CD8-positive, alpha-beta memory T cell (primary cell): ENCODE measurements at regions of chr6 and their contacts with region 1.

Region 1: DNA sequence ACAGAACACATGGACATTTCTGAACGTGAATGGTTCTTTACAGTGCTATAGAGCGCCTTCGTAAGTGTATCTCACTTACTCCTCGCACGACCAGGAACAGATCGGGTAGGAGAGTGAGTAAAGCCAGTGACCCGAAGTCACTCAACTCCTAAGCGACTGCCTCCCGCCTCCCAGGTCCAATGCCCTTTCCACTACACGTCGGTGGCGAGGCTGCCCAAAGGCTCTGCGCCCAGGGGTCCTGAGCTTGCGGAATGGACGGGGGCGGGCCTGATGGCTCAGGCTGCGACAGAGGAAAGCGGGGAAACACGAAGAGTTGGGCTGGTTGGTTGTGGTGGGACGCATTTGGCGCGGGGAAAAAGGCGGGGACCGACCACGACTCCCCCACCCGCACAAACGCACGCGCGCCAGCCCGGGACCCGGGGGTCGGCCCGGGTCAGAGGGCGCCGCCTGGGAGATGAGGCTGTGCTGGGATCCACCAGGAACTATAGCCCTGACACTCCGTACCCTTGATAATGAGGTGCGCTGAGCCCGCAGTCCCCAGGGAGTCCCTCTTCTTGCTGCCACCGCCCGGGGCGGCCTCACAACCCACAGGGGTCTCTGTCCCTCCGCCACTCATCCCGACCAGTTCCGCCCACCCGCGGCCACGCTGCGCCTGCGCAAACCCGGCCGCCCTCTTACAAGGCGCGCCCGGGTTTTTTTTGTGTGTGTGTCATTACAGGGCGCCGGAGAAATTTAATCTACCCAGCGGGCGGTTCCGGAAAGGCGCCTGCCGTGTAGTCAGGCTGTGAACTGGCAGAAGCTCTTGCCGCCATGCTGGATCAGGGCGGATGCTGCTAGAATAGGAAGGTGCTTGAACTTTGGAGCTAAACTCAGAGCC is at the start of gene BLOC1S5:
- DNase-seq: peak; percentile 94 to 98 (median 96)
- H3K4me3 ChIP-seq: peak within 1 kb of the TSS; percentile 83
- H3K4me3 Mint-ChIP-seq: peak within 1 kb of the TSS; percentile 93 to 95 (median 95)
- H3K27ac ChIP-seq: peak within 1 kb of the TSS; percentile 91
- H3K27ac Mint-ChIP-seq: peak within 1 kb of the TSS; percentile 87 to 98 (median 97)
- H3K4me1 ChIP-seq: peaks cover 19% of the 10 kb centered on the region
- H3K4me1 Mint-ChIP-seq: peaks cover 25 to 39% (median 35%) of the 10 kb centered on the region in 3 donors
- H3K27me3 ChIP-seq: no peaks in the 10 kb centered on the region
- H3K27me3 Mint-ChIP-seq: no peaks in the 10 kb centered on the region
- total RNA-seq, gene BLOC1S5: 20.0 to 22.6 TPM

Region 2: DNA sequence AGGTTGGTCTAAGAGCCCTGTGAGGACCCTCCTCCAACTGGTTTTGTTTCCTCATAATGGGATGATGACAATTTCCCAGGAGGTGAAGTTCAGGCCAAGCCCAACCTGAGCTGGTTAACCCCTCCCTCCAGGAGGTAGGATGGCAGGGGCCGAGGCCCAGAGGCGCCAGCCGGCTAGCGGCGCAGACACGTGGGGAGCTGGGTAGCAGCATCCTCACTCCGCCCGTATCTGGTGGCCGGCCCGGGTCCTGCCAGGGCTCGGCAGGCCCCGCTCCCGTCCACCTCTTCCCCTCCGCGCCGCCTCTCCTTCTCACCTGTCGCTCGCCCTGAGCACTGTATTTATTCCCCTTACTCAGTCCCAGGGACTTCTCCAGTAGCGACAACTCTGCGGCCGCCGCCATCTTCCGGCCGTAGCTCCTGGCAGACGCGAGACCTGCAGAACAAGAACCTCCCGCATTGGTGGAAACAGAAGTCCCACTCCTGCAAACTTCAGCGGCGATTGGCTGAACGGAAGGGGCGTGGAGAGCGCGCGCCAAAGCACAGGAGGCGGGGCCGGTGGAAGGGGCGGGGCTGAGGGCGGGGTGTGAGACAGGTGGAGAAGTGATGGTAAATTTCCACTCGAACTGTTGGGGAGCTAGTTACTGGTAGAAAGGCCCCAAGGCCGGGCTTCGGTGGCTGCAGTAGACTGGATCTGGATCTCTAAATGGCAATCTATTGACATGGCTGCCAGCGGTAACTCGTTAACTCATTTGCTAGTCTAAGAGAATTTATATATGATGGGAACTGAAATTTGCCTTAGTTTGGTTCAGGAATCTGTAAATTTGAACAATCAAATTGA is 38.3 kb after region 1 on chr6 and contains the start of gene EEF1E1:
- CTCF ChIA-PET with region 1: interaction called, 4 read pairs
- POLR2A ChIA-PET with region 1: interaction called, 29 read pairs
- DNase-seq: peak; percentile 91 to 98 (median 96)
- H3K4me3 ChIP-seq: peak within 1 kb of the TSS; percentile 98
- H3K4me3 Mint-ChIP-seq: peak within 1 kb of the TSS; percentile 90 to 99 (median 95)
- H3K27ac ChIP-seq: peak within 1 kb of the TSS; percentile 84
- H3K27ac Mint-ChIP-seq: peak within 1 kb of the TSS; percentile 90 to 99 (median 98)
- H3K4me1 ChIP-seq: peaks cover 15% of the 10 kb centered on the region
- H3K4me1 Mint-ChIP-seq: peaks cover 27 to 39% (median 33%) of the 10 kb centered on the region in 3 donors
- H3K27me3 ChIP-seq: no peaks in the 10 kb centered on the region
- H3K27me3 Mint-ChIP-seq: peaks cover 16 to 24% of the 10 kb centered on the region in 2 donors
- total RNA-seq, gene EEF1E1: 71.2 to 76.0 TPM

Region 3: GRCh38 chr6:9704989-9705388 is 1641.0 kb after region 1 on chr6:
- CTCF ChIA-PET with region 1: no interaction called
- POLR2A ChIA-PET with region 1: no interaction called
- DNase-seq: no peak
- H3K4me3 ChIP-seq: no peak overlapping the region
- H3K4me3 Mint-ChIP-seq: no peak overlapping the region
- H3K27ac ChIP-seq: no peak overlapping the region
- H3K27ac Mint-ChIP-seq: no peak overlapping the region
- H3K4me1 ChIP-seq: no peaks in the 10 kb centered on the region
- H3K4me1 Mint-ChIP-seq: no peaks in the 10 kb centered on the region
- H3K27me3 ChIP-seq: no peaks in the 10 kb centered on the region
- H3K27me3 Mint-ChIP-seq: no peaks in the 10 kb centered on the region